Posterior vena cava (tissue), 2 donors: ENCODE measurements at regions of chr12 and their contacts with region 1.

Region 1: GRCh38 chr12:113019041-113019440 is 37.5 kb upstream of the DTX1 start:
- DNase-seq: no peak

Region 2: GRCh38 chr12:112031472-112031871 is 987.6 kb before region 1 on chr12:
- intact Hi-C with region 1: no loop called
- DNase-seq: no peak

Region 3: DNA sequence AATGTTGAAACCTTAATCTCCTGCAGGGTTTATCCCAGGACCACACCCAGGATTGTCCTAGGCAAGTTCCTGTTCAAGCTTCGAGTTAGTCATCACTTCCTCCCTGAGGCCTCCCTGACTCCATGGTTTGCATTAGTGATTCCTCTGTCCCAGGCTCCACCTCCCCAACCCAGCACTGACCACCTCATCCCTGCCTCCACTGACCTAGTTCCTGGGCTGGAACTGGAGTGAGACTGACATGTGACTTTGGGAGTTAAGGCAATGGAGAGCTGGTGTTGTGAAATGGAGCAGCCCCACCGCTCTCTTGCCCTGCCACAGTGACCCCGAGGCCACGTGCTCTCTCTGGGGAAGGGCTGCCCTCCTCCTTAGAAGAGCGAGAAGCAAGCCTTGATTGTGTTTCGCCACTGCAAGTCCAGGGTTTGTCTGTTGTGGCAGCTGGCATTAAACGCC is 21.7 kb after region 1 on chr12:
- intact Hi-C with region 1: loop called in 1 of 2 experiments (anchors 1 kb)
- DNase-seq: peak; percentile 91

Region 4: GRCh38 chr12:113098446-113098896 is 79.4 kb after region 1 on chr12:
- intact Hi-C with region 1: no loop called
- DNase-seq: peak; percentile 93